Activated naive CD4-positive, alpha-beta T cell treated with anti-CD3 and anti-CD28 coated beads for 36 hours (primary cell): ENCODE measurements at regions of chr19 and their contacts with region 1.

Region 1: GRCh38 chr19:1064661-1065605 is 2.0 kb upstream of the ARHGAP45 start:
- DNase-seq: peak; percentile 72
- H3K4me3 Mint-ChIP-seq: no peak overlapping the region
- H3K27ac Mint-ChIP-seq: no peak overlapping the region
- H3K4me1 Mint-ChIP-seq: peaks cover 30% of the 10 kb centered on the region
- H3K27me3 Mint-ChIP-seq: no peaks in the 10 kb centered on the region

Region 2: GRCh38 chr19:1039646-1040475 is 25.1 kb before region 1 on chr19 and contains the start of gene ABCA7:
- CTCF ChIA-PET with region 1: interaction called, 3 read pairs
- intact Hi-C with region 1: loop called (anchors 2 kb)
- DNase-seq: peak; percentile 100
- H3K4me3 Mint-ChIP-seq: peak within 1 kb of the TSS; percentile 94
- H3K27ac Mint-ChIP-seq: peak within 1 kb of the TSS; percentile 65
- H3K4me1 Mint-ChIP-seq: peaks cover 41% of the 10 kb centered on the region
- H3K27me3 Mint-ChIP-seq: no peaks in the 10 kb centered on the region
- total RNA-seq, gene ABCA7: 24.4 to 30.1 TPM

Region 3: DNA sequence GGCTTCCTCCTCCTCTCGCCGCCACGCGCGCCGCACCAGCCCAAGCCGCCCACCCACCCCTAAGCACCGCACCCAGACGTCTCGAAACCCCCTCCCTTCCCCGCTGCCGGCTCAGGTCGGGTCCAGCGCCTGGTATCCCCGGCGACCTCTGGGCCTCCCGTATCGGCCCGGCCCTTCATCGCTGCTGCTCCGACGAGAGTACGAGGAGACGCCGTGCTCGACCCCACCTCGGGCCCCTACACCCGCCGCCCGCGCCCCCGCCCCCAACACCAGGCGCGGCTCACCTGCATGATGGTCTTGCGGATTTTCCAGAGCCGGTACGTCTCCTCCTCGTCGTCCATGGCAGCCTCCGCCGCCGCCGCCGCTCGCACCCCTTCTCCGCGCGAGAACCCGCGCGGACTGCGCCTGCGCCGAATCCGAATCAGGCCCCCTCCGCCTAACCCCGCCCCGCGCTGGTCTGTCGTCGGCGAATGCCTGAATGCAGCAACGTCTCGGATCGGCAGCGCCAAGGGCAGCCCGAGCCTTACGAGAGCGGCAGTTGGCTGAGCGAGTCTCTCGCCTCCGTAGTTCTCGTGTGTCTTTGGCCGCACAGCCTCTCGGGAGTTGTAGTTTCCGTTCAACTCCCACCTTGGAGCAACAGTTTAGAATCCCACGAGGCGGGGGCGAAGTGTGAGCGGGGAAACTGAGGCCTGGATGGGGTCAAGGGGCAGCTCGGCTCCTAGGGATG is 30.2 kb after region 1 on chr19 and contains the start of gene POLR2E:
- CTCF ChIA-PET with region 1: interaction called, 3 read pairs
- intact Hi-C with region 1: loop called (anchors 1 kb)
- DNase-seq: peak; percentile 99
- H3K4me3 Mint-ChIP-seq: peak within 1 kb of the TSS; percentile 92
- H3K27ac Mint-ChIP-seq: peak within 1 kb of the TSS; percentile 92
- H3K4me1 Mint-ChIP-seq: peaks cover 65% of the 10 kb centered on the region
- H3K27me3 Mint-ChIP-seq: no peaks in the 10 kb centered on the region
- total RNA-seq, gene POLR2E: 238 to 258 TPM

Region 4: GRCh38 chr19:1131738-1132551 is 67.0 kb after region 1 on chr19:
- CTCF ChIA-PET with region 1: no interaction called
- intact Hi-C with region 1: loop called (anchors 2 kb)
- DNase-seq: peak; percentile 97
- H3K4me3 Mint-ChIP-seq: peak overlapping the region; percentile 95
- H3K27ac Mint-ChIP-seq: peak overlapping the region; percentile 97
- H3K4me1 Mint-ChIP-seq: peaks cover 48% of the 10 kb centered on the region
- H3K27me3 Mint-ChIP-seq: no peaks in the 10 kb centered on the region

Region 5: GRCh38 chr19:1249298-1249989 is 184.5 kb after region 1 on chr19:
- CTCF ChIA-PET with region 1: interaction called, 8 read pairs
- intact Hi-C with region 1: loop called (anchors 5 kb)
- DNase-seq: peak; percentile 96
- H3K4me3 Mint-ChIP-seq: peak overlapping the region; percentile 75
- H3K27ac Mint-ChIP-seq: peak overlapping the region; percentile 78
- H3K4me1 Mint-ChIP-seq: peaks cover 10% of the 10 kb centered on the region
- H3K27me3 Mint-ChIP-seq: no peaks in the 10 kb centered on the region